ENCODE measurements at regions of chr16 and their contacts with region 1.

Region 1: GRCh38 chr16:66600477-66600876 is 4.0 kb upstream of the CMTM3 start:
- DNase-seq: no peak
- H3K4me3 Mint-ChIP-seq: no peak overlapping the region
- H3K27ac Mint-ChIP-seq: no peak overlapping the region
- H3K4me1 Mint-ChIP-seq: peaks cover 8% of the 10 kb centered on the region
- H3K27me3 Mint-ChIP-seq: peaks cover 11% of the 10 kb centered on the region
- CTCF ChIP-seq: no peak

Region 2: GRCh38 chr16:66562407-66562806 is 38.1 kb before region 1 on chr16:
- CTCF ChIA-PET with region 1: interaction called, 10 read pairs
- POLR2A ChIA-PET with region 1: no interaction called
- intact Hi-C with region 1: no loop called
- DNase-seq: no peak
- H3K4me3 Mint-ChIP-seq: no peak overlapping the region
- H3K27ac Mint-ChIP-seq: no peak overlapping the region
- H3K4me1 Mint-ChIP-seq: no peaks in the 10 kb centered on the region
- H3K27me3 Mint-ChIP-seq: no peaks in the 10 kb centered on the region
- CTCF ChIP-seq: peak; percentile 24